ENCODE measurements at regions of chr5 and their contacts with region 1.

Region 1: DNA sequence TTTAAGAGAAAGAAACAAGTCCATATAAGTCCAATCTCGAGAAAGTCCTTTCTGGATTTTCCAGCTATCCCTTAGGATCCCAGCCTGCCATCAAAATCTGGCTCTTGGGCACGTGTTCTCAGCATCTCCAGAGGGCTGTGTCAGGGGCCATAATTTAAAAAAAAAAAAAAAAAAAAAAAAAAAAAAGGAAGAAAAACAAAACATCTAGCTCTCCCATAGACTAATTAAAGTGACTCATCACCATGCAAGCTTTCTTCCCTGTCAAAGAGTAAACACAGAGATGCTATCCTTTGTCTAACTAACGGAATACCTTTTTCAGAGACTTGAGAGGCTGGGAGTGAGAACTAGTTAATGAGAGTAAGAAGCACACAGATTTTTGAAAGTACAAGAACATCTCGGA is 44.9 kb upstream of the MYO10 start:
- DNase-seq: no peak
- ATAC-seq: peak; percentile 26
- H3K4me3 ChIP-seq: no peak overlapping the region
- H3K27ac ChIP-seq: no peak overlapping the region
- H3K4me1 ChIP-seq: no peaks in the 10 kb centered on the region
- H3K27me3 ChIP-seq: no peaks in the 10 kb centered on the region
- CTCF ChIP-seq: no peak

Region 2: DNA sequence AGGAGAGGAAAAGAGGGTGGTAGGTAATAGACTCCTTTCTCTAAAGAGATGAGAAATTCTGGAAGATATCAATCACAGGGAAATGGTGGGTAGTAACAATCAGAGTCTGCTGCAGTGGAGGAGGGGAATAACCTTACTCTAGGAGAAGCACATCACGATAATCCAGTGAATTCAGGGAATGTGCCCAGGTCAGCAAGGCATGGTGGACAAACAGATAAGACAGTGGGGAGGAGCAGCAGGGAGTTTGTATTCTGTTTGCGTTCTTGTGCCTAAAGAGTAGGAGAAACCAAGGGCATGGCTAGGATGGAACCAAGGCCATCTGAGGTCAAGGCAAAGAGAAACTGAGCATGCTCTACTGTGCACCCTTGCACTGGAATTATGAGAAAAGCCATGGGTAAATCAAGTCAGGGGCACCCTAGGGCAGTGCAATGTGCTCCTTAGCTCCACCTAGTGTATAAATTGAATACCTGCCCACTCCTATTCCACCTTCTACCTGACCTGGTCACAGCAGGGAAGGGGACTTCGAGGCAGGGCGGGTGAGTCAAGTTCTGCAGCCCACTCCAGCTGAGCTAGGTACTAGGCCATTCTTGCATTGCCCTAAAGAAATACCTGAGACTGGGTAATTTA is 395.8 kb before region 1 on chr5:
- CTCF ChIA-PET with region 1: interaction called, 11 read pairs
- POLR2A ChIA-PET with region 1: no interaction called
- in situ Hi-C with region 1: no loop called
- intact Hi-C with region 1: no loop called
- DNase-seq: no peak
- ATAC-seq: peak; percentile 81
- H3K4me3 ChIP-seq: no peak overlapping the region
- H3K27ac ChIP-seq: no peak overlapping the region
- H3K4me1 ChIP-seq: no peaks in the 10 kb centered on the region
- H3K27me3 ChIP-seq: no peaks in the 10 kb centered on the region
- CTCF ChIP-seq: peak; percentile 84

Region 3: GRCh38 chr5:16970826-16971225 is 10.2 kb before region 1 on chr5:
- CTCF ChIA-PET with region 1: interaction called, 5 read pairs
- POLR2A ChIA-PET with region 1: interaction called, 10 read pairs
- in situ Hi-C with region 1: no loop called
- intact Hi-C with region 1: no loop called
- DNase-seq: no peak
- ATAC-seq: no peak
- H3K4me3 ChIP-seq: no peak overlapping the region
- H3K27ac ChIP-seq: no peak overlapping the region
- H3K4me1 ChIP-seq: no peaks in the 10 kb centered on the region
- H3K27me3 ChIP-seq: no peaks in the 10 kb centered on the region
- CTCF ChIP-seq: no peak

Region 4: GRCh38 chr5:17081142-17081541 is 100.2 kb after region 1 on chr5:
- CTCF ChIA-PET with region 1: no interaction called
- POLR2A ChIA-PET with region 1: interaction called, 17 read pairs
- in situ Hi-C with region 1: no loop called
- intact Hi-C with region 1: no loop called
- DNase-seq: no peak
- ATAC-seq: no peak
- H3K4me3 ChIP-seq: no peak overlapping the region
- H3K27ac ChIP-seq: no peak overlapping the region
- H3K4me1 ChIP-seq: no peaks in the 10 kb centered on the region
- H3K27me3 ChIP-seq: no peaks in the 10 kb centered on the region
- CTCF ChIP-seq: no peak

Region 5: GRCh38 chr5:17238521-17239041 is 257.6 kb after region 1 on chr5:
- CTCF ChIA-PET with region 1: no interaction called
- POLR2A ChIA-PET with region 1: no interaction called
- in situ Hi-C with region 1: no loop called
- intact Hi-C with region 1: no loop called
- DNase-seq: no peak
- ATAC-seq: peak; percentile 70
- H3K4me3 ChIP-seq: peak overlapping the region in 1 of 2 experiments; percentile 10; a peak in 1 of 4 replicates
- H3K27ac ChIP-seq: peak overlapping the region; percentile 83
- H3K4me1 ChIP-seq: peaks cover 83% of the 10 kb centered on the region
- H3K27me3 ChIP-seq: no peaks in the 10 kb centered on the region
- CTCF ChIP-seq: no peak

Measured in Panc1 (cell line).